WTC11 (cell line): ENCODE measurements at regions of chr14 and their contacts with region 1.

Region 1: DNA sequence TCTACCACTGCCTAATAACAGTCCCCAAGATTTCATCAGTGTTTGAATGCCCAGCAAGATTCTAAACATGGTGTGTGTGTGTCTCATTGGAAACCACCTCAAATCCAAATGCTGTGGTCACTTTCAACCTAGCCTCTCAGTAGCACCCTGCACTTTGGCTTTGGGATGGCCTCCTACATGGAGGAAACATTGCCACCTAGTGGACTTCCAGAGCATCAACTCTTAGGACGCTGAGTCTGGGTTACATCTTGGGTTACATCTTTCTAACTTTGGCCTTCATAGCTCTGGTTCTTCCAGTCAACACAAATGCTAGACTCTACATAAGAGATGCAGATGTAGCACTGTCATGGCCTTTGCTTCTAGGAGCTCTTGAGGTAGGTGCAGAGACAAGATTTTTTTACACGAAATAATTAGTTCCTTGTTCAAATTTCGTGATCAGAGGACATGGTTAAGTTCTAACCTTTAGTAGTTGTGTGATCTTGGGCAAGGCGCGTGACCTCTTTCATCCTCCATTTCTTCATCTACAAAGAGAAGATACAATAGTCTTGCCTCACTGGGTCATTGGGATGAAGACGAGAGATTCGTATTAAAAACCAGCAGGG is 113.5 kb upstream of the VASH1 start:
- DNase-seq: peak; percentile 32
- ATAC-seq: peak; percentile 73
- H3K4me3 Mint-ChIP-seq: no peak overlapping the region
- H3K27ac Mint-ChIP-seq: no peak overlapping the region
- H3K4me1 Mint-ChIP-seq: peaks cover 13% of the 10 kb centered on the region
- H3K27me3 Mint-ChIP-seq: no peaks in the 10 kb centered on the region
- CTCF ChIP-seq: peak; percentile 69

Region 2: DNA sequence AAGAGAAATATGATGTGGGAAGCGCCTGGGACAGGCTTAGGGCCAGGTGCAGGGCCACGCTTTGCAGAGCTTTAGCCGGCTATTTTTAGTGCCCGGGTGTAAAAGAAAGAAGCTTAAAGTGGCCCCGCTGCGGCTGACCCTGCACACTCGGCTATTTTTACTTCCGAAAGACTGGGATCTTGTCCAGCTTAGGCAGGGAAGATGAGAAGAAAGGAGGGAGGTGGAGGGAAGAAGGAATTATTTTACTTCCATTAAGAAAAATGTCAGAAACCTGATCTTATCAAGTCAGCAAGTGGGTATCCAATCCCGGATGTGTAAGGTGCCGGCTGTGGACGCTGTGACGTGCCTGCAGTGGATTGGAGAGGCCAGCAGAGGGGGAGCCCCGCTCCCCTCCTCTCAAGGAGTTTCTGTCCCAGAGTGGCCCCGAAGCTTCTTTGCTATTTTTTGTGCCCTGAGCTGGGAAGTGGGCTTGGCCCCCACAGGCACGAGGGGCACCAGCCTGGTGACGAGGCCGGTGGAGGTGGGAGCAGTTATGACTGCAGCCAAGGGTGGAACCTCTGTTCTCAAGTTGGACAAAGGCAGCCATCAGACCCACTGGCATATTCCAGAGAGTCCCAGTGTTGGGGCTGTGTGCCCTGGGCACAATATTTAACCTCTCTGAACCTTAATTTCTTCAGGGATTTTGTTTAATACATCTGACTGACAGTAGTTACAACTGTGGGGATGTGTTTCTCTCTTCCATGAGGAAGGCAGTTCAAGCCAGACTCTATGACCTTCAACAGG is 174.1 kb before region 1 on chr14:
- CTCF ChIA-PET with region 1: interaction called, 11 read pairs
- POLR2A ChIA-PET with region 1: no interaction called
- DNase-seq: peak; percentile 59
- ATAC-seq: peak; percentile 98
- H3K4me3 Mint-ChIP-seq: no peak overlapping the region
- H3K27ac Mint-ChIP-seq: no peak overlapping the region
- H3K4me1 Mint-ChIP-seq: peaks cover 6% of the 10 kb centered on the region; the same call in 1 of the 2 replicates
- H3K27me3 Mint-ChIP-seq: no peaks in the 10 kb centered on the region; the same call in 1 of the 2 replicates
- CTCF ChIP-seq: no peak